ENCODE measurements at regions of chr12 and their contacts with region 1.

Region 1: DNA sequence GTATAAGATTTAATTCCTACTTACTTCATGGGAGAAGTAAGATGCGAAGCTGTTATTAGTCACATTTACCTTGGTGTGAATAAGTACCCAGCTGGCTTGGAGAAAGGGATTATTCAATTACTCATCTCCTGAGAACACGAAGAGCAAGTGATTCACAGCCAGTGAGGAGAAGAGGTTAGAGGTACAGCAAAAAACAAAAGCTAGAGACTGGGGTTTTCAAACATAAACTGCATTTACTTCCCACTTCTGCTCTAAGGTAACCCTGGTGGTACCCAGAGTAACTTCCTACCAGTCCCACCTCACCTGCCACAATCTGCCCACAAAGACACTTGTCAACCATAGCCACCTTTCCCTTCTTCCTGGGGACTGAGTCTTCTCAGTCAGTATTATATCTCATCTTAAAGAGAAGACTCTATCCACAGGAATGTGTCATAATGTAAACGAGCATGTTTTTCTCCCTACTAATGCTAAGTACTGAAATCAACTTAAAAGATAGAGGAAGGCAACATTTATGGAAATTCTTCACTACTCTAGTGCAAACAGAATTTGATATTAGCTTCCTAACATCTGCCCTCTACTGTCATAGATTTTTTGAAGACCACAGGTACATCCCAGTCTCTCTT is 6.0 kb upstream of the IL22 start:
- DNase-seq: peak; percentile 89
- ATAC-seq: peak; percentile 96
- H3K4me3 ChIP-seq: peak overlapping the region; percentile 47
- H3K27ac ChIP-seq: peak overlapping the region; percentile 96
- H3K4me1 ChIP-seq: peaks cover 22% of the 10 kb centered on the region
- H3K27me3 ChIP-seq: no peaks in the 10 kb centered on the region
- CTCF ChIP-seq: peak; percentile 38; the same call in 1 of the 2 replicates

Region 2: DNA sequence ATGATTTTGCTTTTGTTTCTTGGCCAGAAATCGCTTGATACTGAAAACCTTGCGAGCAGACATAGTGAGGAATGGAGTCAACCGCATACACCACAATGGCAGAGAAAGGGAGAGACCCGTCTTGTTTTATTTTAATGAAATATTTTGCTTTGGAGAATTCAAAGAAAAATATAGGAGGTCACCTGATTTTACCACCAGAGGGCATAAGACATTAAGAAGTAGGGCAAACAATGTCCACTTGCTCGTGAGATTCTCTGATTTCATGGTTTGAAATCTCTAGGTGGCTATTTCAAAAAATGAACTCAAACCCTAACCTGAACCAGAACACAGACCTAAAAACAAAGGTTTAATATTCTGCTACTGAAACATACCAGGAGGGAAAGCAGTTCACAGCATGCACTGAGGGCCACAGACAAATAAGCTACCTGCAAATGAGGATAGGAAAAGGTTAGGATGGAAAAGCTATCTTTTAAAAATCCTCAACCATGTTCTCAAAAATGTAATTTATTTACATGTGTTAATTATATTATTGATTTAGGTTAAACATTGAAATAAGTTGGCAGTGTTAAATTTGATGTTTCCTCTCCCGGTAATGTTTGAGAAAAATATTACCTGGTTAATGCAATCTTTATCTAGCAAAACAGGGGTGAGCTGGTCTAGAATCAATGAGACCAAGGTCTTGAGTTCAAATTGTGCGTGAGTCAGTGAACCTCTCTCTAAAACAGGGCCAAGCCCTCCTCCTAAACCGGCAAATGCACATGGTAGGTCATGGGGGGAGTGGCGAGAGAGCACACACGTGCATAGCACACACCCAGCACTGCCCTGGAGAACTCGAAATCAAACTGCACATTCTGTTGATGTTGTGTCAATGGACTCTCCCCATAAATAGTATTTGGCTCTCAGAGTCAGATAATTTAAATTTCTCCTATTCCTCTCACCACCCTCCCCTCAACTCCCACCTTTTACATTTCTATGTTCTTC is 257.7 kb before region 1 on chr12:
- CTCF ChIA-PET with region 1: no interaction called
- POLR2A ChIA-PET with region 1: no interaction called
- intact Hi-C with region 1: no loop called
- DNase-seq: peak; percentile 60
- ATAC-seq: peak; percentile 38; the same call in 1 of the 2 replicates
- H3K4me3 ChIP-seq: no peak overlapping the region
- H3K27ac ChIP-seq: no peak overlapping the region
- H3K4me1 ChIP-seq: no peaks in the 10 kb centered on the region
- H3K27me3 ChIP-seq: no peaks in the 10 kb centered on the region
- CTCF ChIP-seq: peak; percentile 71

Region 3: DNA sequence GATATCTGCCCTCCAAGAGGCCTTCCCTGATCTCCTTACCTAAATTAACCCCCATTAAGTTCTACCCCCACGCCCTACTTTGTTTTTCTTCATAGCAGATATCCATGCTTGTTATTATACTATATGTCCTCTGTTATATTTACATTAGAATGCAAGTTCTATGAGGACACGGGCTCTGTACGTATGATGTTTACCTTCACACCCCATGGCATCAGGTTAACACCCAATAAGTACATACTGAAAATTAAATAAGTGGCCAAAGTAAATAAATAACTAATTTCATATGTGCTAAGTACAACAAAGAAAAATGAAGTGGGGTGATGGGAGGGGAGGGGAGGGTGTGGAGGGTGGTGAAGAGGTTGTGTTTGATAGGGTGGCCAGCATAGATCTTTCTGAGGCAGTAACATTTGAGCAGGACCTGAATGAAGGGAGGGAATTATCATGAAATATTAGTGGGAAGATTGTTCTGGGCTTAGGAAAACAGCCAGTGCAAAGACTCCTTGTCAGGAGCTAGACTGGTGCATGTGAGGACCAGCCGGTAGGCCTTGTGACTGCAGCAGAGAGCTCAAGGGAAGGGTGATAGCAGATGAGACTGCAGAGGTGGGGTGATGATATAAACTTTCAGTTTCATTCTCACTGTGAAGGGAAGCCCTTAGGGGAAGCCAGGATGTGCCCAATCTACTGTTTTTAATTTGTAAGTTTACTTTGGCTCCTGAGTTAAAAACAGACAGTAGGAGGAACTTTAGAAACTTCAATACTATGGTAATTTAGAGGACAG is 18.6 kb before region 1 on chr12:
- CTCF ChIA-PET with region 1: no interaction called
- POLR2A ChIA-PET with region 1: interaction called, 4 read pairs
- intact Hi-C with region 1: loop called (anchors 1 kb)
- DNase-seq: peak; percentile 8
- ATAC-seq: peak; percentile 14; the same call in 1 of the 2 replicates
- H3K4me3 ChIP-seq: no peak overlapping the region
- H3K27ac ChIP-seq: peak overlapping the region; percentile 87
- H3K4me1 ChIP-seq: peaks cover 28% of the 10 kb centered on the region
- H3K27me3 ChIP-seq: no peaks in the 10 kb centered on the region
- CTCF ChIP-seq: no peak

Measured in PC-3 (cell line).